ENCODE measurements at regions of chr1 and their contacts with region 1.

Region 1: GRCh38 chr1:91282695-91283420 is 121.8 kb downstream of the HFM1 start:
- DNase-seq: peak; percentile 9
- ATAC-seq: peak; percentile 76
- H3K4me3 ChIP-seq: no peak overlapping the region
- H3K27ac ChIP-seq: no peak overlapping the region
- H3K4me1 ChIP-seq: no peaks in the 10 kb centered on the region
- H3K27me3 ChIP-seq: no peaks in the 10 kb centered on the region
- CTCF ChIP-seq: peak; percentile 71 to 75 (median 71)
- EP300 ChIP-seq: no peak
- POLR2A ChIP-seq: no peak
- RAD21 ChIP-seq: peak; percentile 84

Region 2: GRCh38 chr1:90114521-90115141 is 1168.2 kb before region 1 on chr1:
- CTCF ChIA-PET with region 1: interaction called, 4 read pairs
- POLR2A ChIA-PET with region 1: no interaction called
- RAD21 ChIA-PET with region 1: no interaction called
- SMC1A ChIA-PET with region 1: no interaction called
- in situ Hi-C with region 1: no loop called
- intact Hi-C with region 1: loop called (anchors 5 kb)
- DNase-seq: peak; percentile 8
- ATAC-seq: peak; percentile 65
- H3K4me3 ChIP-seq: no peak overlapping the region
- H3K27ac ChIP-seq: no peak overlapping the region
- H3K4me1 ChIP-seq: no peaks in the 10 kb centered on the region
- H3K27me3 ChIP-seq: no peaks in the 10 kb centered on the region
- CTCF ChIP-seq: peak; percentile 55 to 73 (median 72); a peak in 5 of 6 replicates
- EP300 ChIP-seq: no peak
- POLR2A ChIP-seq: no peak
- RAD21 ChIP-seq: peak; percentile 93

Region 3: DNA sequence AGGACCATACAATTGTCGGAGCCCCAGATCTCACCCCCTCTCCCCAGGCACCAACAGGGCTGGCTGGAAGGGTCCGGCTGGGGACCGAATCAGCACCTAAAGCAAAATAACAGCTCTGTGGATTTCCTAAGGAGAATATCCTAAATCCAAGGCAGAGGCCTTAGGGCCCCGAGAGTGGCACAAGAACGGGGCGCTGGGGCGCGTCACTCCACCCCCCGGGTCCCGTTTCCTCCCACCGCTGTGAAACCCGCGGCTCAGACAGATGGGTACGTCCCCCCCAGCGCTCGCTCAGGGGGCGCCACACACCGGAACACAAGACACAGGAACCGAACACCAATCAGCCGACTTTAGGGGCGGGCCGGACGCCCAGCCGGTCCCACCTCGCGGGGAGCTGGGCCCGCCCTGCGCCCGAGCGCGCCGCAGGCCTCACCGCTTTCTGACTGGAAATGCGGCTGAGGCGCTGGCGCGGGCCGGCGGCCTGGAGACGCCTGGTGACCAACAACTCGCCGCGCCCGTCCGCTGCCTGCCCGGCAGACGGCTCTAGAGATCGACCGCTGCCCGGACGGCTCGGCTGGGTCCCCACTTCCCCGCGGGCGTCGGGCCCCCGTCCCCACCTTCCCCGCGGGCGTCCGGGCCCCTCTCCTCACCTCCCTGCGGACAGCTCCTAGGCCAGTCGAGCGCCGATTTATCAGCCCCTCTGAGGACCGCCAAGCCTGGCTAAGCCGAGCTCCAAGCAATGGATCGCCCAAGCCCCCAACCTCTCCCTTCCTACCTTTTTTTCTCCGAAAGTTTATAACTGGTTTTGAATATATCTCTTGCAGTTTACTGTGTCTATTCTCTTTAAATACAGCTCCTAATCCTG is 121.5 kb after region 1 on chr1 and contains the start of gene HFM1:
- CTCF ChIA-PET with region 1: interaction called, 6 read pairs
- POLR2A ChIA-PET with region 1: no interaction called
- RAD21 ChIA-PET with region 1: no interaction called
- SMC1A ChIA-PET with region 1: no interaction called
- in situ Hi-C with region 1: no loop called
- intact Hi-C with region 1: loop called (anchors 2 kb)
- DNase-seq: no peak
- ATAC-seq: peak; percentile 97
- H3K4me3 ChIP-seq: peak within 1 kb of the TSS; percentile 60
- H3K27ac ChIP-seq: no peak within 1 kb of the TSS
- H3K4me1 ChIP-seq: no peaks in the 10 kb centered on the region
- H3K27me3 ChIP-seq: peaks cover 0 to 10% of the 10 kb centered on the region in 2 experiments; a peak in 3 of 4 replicates
- CTCF ChIP-seq: no peak
- EP300 ChIP-seq: no peak
- POLR2A ChIP-seq: no peak
- RAD21 ChIP-seq: no peak
- polyA plus RNA-seq, gene HFM1: not detected

Region 4: GRCh38 chr1:91924146-91924545 is 641.3 kb after region 1 on chr1:
- CTCF ChIA-PET with region 1: interaction called, 25 read pairs
- POLR2A ChIA-PET with region 1: no interaction called
- RAD21 ChIA-PET with region 1: interaction called, 3 read pairs
- SMC1A ChIA-PET with region 1: interaction called, 4 read pairs
- in situ Hi-C with region 1: loop called (anchors 5 kb)
- intact Hi-C with region 1: loop called (anchors 1 kb)
- DNase-seq: no peak
- ATAC-seq: no peak
- H3K4me3 ChIP-seq: no peak overlapping the region
- H3K27ac ChIP-seq: no peak overlapping the region
- H3K4me1 ChIP-seq: no peaks in the 10 kb centered on the region
- H3K27me3 ChIP-seq: no peaks in the 10 kb centered on the region
- CTCF ChIP-seq: no peak
- EP300 ChIP-seq: no peak
- POLR2A ChIP-seq: no peak
- RAD21 ChIP-seq: no peak

Region 5: DNA sequence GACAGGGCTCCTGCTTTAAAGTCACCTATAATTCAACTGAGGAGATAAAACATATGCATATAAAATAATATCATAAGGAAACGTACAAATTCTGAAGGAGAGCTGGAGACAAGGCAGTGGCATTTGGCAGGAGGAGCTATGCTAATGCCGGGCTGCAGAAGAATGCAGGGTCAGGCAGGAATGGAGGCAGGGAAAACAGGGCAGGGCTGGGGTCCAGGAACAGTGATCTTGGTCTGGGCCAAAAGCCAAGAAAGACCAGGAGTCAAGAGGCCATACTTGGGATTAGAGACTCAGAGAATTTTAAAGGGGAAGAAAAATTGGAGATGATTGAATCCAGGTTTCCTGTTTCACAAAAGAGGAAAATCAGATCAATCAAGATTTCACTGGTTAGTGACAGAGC is 646.4 kb after region 1 on chr1:
- CTCF ChIA-PET with region 1: interaction called, 25 read pairs
- POLR2A ChIA-PET with region 1: no interaction called
- RAD21 ChIA-PET with region 1: interaction called, 3 read pairs
- SMC1A ChIA-PET with region 1: interaction called, 7 read pairs
- in situ Hi-C with region 1: loop called (anchors 5 kb)
- intact Hi-C with region 1: loop called (anchors 1 kb)
- DNase-seq: no peak
- ATAC-seq: no peak
- H3K4me3 ChIP-seq: no peak overlapping the region
- H3K27ac ChIP-seq: no peak overlapping the region
- H3K4me1 ChIP-seq: no peaks in the 10 kb centered on the region
- H3K27me3 ChIP-seq: no peaks in the 10 kb centered on the region
- CTCF ChIP-seq: no peak
- EP300 ChIP-seq: no peak
- POLR2A ChIP-seq: no peak
- RAD21 ChIP-seq: no peak